Ascending aorta (tissue), 2 donors: ENCODE measurements at regions of chr6 and their contacts with region 1.

Region 1: GRCh38 chr6:52577022-52577777 is at the start of gene TRAM2:
- DNase-seq: peak; percentile 16 to 89
- H3K4me3 ChIP-seq: peak within 1 kb of the TSS; percentile 82 to 88
- H3K27ac ChIP-seq: peak within 1 kb of the TSS; percentile 99 to 100
- H3K4me1 ChIP-seq: peaks cover 3 to 26% of the 10 kb centered on the region in 2 donors
- H3K27me3 ChIP-seq: no peaks in the 10 kb centered on the region
- CTCF ChIP-seq: no peak
- total RNA-seq, gene TRAM2: 32.6 TPM

Region 2: GRCh38 chr6:51830666-51831065 is 746.5 kb before region 1 on chr6:
- intact Hi-C with region 1: no loop called
- DNase-seq: no peak
- H3K4me3 ChIP-seq: no peak overlapping the region
- H3K27ac ChIP-seq: no peak overlapping the region
- H3K4me1 ChIP-seq: no peaks in the 10 kb centered on the region
- H3K27me3 ChIP-seq: no peaks in the 10 kb centered on the region
- CTCF ChIP-seq: no peak

Region 3: GRCh38 chr6:52419809-52420670 is 157.2 kb before region 1 on chr6 and contains the start of gene EFHC1:
- intact Hi-C with region 1: loop called (anchors 1 kb)
- DNase-seq: peak; percentile 96 to 99
- H3K4me3 ChIP-seq: peak within 1 kb of the TSS; percentile 71 to 95
- H3K27ac ChIP-seq: peak within 1 kb of the TSS; percentile 82 to 84
- H3K4me1 ChIP-seq: peaks cover 2 to 7% of the 10 kb centered on the region in 2 donors
- H3K27me3 ChIP-seq: no peaks in the 10 kb centered on the region
- CTCF ChIP-seq: no peak
- total RNA-seq, gene EFHC1: 7.3 TPM

Region 4: GRCh38 chr6:52503848-52504781 is 73.1 kb before region 1 on chr6:
- intact Hi-C with region 1: loop called (anchors 1 kb)
- DNase-seq: peak; percentile 87 to 93
- H3K4me3 ChIP-seq: no peak overlapping the region
- H3K27ac ChIP-seq: peak overlapping the region; percentile 72 to 82
- H3K4me1 ChIP-seq: peaks cover 24 to 35% of the 10 kb centered on the region in 2 donors
- H3K27me3 ChIP-seq: no peaks in the 10 kb centered on the region
- CTCF ChIP-seq: no peak

Region 5: DNA sequence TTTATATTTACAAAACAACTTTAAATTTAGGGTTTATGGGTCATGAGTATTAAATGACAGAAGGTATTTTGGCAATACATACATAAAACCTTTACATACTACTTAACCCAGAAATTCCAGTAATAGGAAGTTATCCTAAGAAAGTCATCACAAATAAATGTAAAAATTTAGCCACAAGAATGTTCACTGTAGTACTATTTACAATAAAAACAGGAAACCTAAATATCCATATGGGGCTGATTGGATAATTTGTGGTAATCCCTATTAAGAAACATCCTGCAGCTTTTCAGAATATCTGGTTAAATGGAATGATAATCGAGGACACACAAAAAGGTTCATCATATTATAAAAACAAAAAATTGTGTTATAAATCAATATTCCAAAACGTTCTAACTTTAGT is 44.7 kb before region 1 on chr6:
- intact Hi-C with region 1: no loop called
- DNase-seq: no peak
- H3K4me3 ChIP-seq: no peak overlapping the region
- H3K27ac ChIP-seq: no peak overlapping the region
- H3K4me1 ChIP-seq: peaks cover 0 to 22% of the 10 kb centered on the region in 2 donors
- H3K27me3 ChIP-seq: no peaks in the 10 kb centered on the region
- CTCF ChIP-seq: no peak

Region 6: GRCh38 chr6:52543729-52544601 is 33.2 kb before region 1 on chr6:
- intact Hi-C with region 1: loop called (anchors 5 kb)
- DNase-seq: peak in 1 of 2 donors; percentile 62
- H3K4me3 ChIP-seq: peak overlapping the region in 1 of 2 donors; percentile 13
- H3K27ac ChIP-seq: peak overlapping the region; percentile 86 to 87
- H3K4me1 ChIP-seq: peaks cover 23 to 86% of the 10 kb centered on the region in 2 donors
- H3K27me3 ChIP-seq: no peaks in the 10 kb centered on the region
- CTCF ChIP-seq: no peak

Region 7: GRCh38 chr6:52598123-52598823 is 21.1 kb after region 1 on chr6:
- intact Hi-C with region 1: loop called (anchors 1 kb)
- DNase-seq: peak in 1 of 2 donors; percentile 85
- H3K4me3 ChIP-seq: peak overlapping the region in 1 of 2 donors; percentile 46
- H3K27ac ChIP-seq: peak overlapping the region; percentile 64 to 78
- H3K4me1 ChIP-seq: peaks cover 16 to 33% of the 10 kb centered on the region in 2 donors
- H3K27me3 ChIP-seq: no peaks in the 10 kb centered on the region
- CTCF ChIP-seq: peak; percentile 64 to 79 (median 69)

Region 8: DNA sequence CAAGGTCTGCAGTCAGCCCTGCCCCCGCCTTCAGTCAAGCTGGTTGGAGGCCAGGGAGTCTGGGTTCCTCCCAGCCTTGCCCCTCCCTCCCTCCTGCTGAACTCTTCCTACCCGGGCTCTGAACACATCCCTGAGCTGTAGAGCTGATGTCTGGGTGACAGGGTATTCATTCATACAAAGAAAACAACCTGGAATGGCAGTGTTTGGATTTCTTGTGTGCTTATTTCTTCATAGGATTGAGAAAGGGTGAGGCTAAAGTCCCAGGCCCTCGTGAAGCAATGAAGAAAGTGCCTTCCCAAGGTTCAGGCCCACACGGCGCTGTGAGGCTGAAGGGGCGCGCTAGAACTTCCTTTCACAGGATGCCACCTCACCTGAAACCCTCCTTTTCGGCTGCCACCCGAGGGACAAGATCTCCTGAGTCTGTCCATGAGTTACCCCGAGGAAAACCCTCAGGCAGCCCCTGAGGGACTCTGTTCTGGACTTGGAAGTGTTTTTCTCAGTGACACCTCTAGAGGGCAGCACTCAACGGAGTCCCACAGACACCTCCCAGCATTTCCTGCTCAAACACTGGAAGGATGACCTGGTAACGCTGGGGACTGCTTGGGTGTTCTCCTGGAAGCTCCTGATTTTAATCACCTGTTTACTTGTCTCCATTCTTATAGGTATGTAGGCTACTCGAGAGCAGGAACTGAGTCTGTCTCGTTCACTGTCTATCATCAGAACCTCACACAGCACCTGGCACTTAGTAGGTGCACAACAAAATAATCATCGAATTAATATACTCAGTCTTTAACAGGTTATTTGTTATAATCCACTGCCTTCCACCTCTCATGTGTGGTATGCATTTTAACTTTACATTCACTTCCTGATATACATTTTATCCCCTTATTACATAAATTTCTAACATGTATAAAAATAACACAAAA is 238.2 kb after region 1 on chr6:
- intact Hi-C with region 1: no loop called
- DNase-seq: no peak
- H3K4me3 ChIP-seq: no peak overlapping the region
- H3K27ac ChIP-seq: no peak overlapping the region
- H3K4me1 ChIP-seq: no peaks in the 10 kb centered on the region
- H3K27me3 ChIP-seq: no peaks in the 10 kb centered on the region
- CTCF ChIP-seq: peak in 2 of 3 experiments; percentile 44 to 61

Region 9: DNA sequence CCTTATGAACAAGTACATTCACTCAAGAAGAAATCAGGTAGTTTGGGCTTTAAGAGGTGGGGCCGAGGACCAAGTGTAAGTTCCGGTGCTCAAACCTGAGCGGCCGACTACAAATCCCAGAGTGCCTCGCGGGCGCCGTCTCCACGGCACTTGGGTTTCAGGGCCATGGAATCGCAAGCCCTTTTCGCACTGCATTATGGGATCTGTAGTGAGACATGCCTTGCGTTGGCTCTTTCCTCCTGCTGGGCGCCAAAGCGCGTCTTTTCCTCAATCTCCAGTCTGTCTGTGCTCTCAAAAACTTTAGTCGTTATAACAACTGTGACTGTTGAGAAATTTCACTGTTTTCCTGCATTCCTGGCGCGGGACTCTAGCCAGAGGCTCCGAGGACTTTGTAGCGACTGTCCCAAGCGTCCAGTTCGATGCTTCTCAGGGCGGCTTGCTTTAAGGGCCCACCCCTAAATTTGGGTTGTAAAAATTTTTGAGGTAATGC is 487.6 kb after region 1 on chr6:
- intact Hi-C with region 1: loop called (anchors 2 kb)
- DNase-seq: peak; percentile 95 to 99
- H3K4me3 ChIP-seq: peak overlapping the region; percentile 97 to 98
- H3K27ac ChIP-seq: peak overlapping the region; percentile 94 to 95
- H3K4me1 ChIP-seq: peaks cover under 1 to 4% of the 10 kb centered on the region in 2 donors
- H3K27me3 ChIP-seq: no peaks in the 10 kb centered on the region
- CTCF ChIP-seq: no peak